ENCODE measurements at regions of chr7 and their contacts with region 1.

Region 1: GRCh38 chr7:38335492-38336147 is 62.2 kb upstream of the TARP start:
- DNase-seq: peak; percentile 84
- H3K4me3 Mint-ChIP-seq: no peak overlapping the region
- H3K27ac Mint-ChIP-seq: peak overlapping the region; percentile 39
- H3K4me1 Mint-ChIP-seq: peaks cover 38% of the 10 kb centered on the region
- H3K27me3 Mint-ChIP-seq: peaks cover 3% of the 10 kb centered on the region

Region 2: GRCh38 chr7:38107486-38107893 is 228.1 kb before region 1 on chr7:
- CTCF ChIA-PET with region 1: interaction called, 25 read pairs
- DNase-seq: peak; percentile 76
- H3K4me3 Mint-ChIP-seq: no peak overlapping the region
- H3K27ac Mint-ChIP-seq: no peak overlapping the region
- H3K4me1 Mint-ChIP-seq: no peaks in the 10 kb centered on the region
- H3K27me3 Mint-ChIP-seq: peaks cover 12% of the 10 kb centered on the region

Region 3: GRCh38 chr7:38222481-38223096 is 113.0 kb before region 1 on chr7:
- CTCF ChIA-PET with region 1: interaction called, 182 read pairs
- DNase-seq: no peak
- H3K4me3 Mint-ChIP-seq: no peak overlapping the region
- H3K27ac Mint-ChIP-seq: no peak overlapping the region
- H3K4me1 Mint-ChIP-seq: peaks cover 20% of the 10 kb centered on the region
- H3K27me3 Mint-ChIP-seq: no peaks in the 10 kb centered on the region

Region 4: GRCh38 chr7:38232502-38233366 is 102.9 kb before region 1 on chr7:
- CTCF ChIA-PET with region 1: interaction called, 12 read pairs
- DNase-seq: peak; percentile 79
- H3K4me3 Mint-ChIP-seq: peak overlapping the region; percentile 48
- H3K27ac Mint-ChIP-seq: peak overlapping the region; percentile 96
- H3K4me1 Mint-ChIP-seq: peaks cover 76% of the 10 kb centered on the region
- H3K27me3 Mint-ChIP-seq: no peaks in the 10 kb centered on the region

Region 5: GRCh38 chr7:38318803-38319416 is 16.7 kb before region 1 on chr7:
- CTCF ChIA-PET with region 1: interaction called, 54 read pairs
- DNase-seq: no peak
- H3K4me3 Mint-ChIP-seq: no peak overlapping the region
- H3K27ac Mint-ChIP-seq: peak overlapping the region; percentile 73
- H3K4me1 Mint-ChIP-seq: peaks cover 39% of the 10 kb centered on the region
- H3K27me3 Mint-ChIP-seq: no peaks in the 10 kb centered on the region

Region 6: DNA sequence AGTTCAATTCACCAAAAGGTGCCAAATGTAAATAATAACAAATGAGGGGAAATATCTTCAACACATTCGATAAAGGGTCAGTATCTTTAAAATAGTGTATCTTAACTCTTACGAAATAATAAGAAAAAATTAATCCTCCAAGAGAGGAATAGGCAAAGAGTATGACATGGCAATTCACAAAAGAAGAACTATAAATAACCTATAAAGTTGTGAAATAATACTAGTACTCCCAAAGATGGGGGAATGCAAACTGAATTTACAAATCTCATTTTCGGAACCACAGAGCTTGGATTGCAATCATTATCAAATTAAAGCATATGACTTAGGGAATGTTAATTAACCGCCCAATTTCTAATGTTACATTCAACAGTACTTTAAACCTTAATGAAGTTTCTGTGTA is 16.0 kb after region 1 on chr7:
- CTCF ChIA-PET with region 1: interaction called, 21 read pairs
- DNase-seq: no peak
- H3K4me3 Mint-ChIP-seq: no peak overlapping the region
- H3K27ac Mint-ChIP-seq: no peak overlapping the region
- H3K4me1 Mint-ChIP-seq: peaks cover 45% of the 10 kb centered on the region
- H3K27me3 Mint-ChIP-seq: no peaks in the 10 kb centered on the region

Region 7: DNA sequence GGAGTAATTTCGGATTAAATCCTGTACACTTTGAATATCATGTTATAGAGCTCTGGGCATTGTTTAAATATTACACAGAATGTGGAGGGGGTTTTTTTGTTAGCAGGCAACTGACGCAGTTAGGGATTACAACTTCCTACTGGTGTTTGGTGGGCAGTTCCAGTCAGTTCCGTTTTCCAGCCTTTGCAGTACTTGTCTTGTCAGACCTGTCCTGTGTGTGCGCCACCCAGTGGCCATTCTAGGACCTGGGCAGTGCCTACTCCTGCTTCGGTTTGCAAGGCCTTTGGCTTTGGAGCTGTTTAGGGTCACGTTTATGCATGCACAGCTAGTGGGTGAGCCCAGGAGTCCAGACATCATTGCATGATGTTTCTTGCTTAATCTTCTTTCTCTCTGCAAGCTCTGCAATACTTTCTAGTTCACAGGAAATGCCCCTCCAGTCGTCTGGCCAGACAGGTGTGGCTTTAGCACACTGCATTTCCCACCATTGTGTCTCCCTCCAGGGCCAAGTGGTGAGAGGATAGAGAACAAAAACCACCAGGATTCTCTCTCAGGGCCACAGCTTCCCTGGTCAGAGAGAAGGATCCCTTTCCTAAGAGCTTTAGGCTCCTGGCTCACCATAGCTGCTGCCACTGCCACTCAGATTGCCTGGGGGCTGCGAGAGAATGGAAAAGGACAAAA is 34.3 kb after region 1 on chr7:
- CTCF ChIA-PET with region 1: interaction called, 25 read pairs
- DNase-seq: peak; percentile 77
- H3K4me3 Mint-ChIP-seq: no peak overlapping the region
- H3K27ac Mint-ChIP-seq: peak overlapping the region; percentile 3
- H3K4me1 Mint-ChIP-seq: peaks cover 45% of the 10 kb centered on the region
- H3K27me3 Mint-ChIP-seq: no peaks in the 10 kb centered on the region

Region 8: DNA sequence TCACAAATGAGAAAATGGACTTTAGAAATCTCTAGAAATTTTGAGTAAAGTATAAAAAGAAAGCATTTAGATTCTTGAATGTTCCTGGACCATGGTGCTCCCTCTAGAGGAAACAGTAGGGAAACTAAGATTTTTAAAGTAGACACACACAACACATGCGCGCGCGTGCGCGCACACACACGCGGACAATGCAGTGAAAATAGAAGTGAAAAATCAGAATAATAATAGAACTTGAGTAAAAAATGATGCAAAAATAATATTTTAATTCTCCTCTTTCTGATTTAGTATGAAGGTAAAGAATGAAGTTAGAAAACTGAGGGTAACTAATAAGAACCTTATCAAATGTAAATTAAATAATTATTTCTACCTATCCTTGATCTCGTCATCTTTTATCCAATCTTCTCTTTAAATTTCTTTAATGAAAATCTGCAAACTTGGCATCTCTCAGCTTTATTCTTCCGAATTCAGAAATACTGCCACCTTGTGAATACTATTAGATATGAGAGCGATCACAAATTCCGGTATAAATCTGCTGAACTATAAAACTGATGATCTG is 412.5 kb after region 1 on chr7:
- CTCF ChIA-PET with region 1: no interaction called
- DNase-seq: no peak
- H3K4me3 Mint-ChIP-seq: no peak overlapping the region
- H3K27ac Mint-ChIP-seq: no peak overlapping the region
- H3K4me1 Mint-ChIP-seq: no peaks in the 10 kb centered on the region
- H3K27me3 Mint-ChIP-seq: no peaks in the 10 kb centered on the region

Measured in activated naive CD4-positive, alpha-beta T cell treated with anti-CD3 and anti-CD28 coated beads, Interleukin-2, amount 10 ng/mL, durations not matched to agents 7 days and 5 days (primary cell).